PC-3 (cell line): ENCODE measurements at regions of chr3 and their contacts with region 1.

Region 1: DNA sequence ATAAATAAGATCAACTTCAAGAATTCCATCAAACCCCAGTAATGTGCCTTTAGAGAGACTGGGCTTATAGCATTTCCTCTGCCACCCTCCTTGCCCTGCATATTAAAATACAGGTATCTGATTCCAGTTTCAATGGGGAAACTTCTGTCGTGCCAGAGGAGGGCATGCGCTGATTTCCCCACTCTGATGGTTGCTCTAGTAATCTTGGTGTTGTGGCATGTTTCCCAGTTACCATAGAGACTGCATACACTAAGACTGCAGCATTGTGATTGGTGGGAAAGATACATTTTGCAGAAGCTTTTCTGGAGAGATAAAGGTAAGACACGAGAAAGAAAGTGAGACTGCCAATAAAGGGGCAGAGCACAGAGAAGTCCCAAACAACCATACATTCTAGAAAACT is 225.6 kb downstream of the TIGIT start:
- DNase-seq: no peak
- ATAC-seq: no peak
- H3K4me3 ChIP-seq: no peak overlapping the region
- H3K27ac ChIP-seq: no peak overlapping the region
- H3K4me1 ChIP-seq: no peaks in the 10 kb centered on the region
- H3K27me3 ChIP-seq: no peaks in the 10 kb centered on the region
- CTCF ChIP-seq: no peak

Region 2: DNA sequence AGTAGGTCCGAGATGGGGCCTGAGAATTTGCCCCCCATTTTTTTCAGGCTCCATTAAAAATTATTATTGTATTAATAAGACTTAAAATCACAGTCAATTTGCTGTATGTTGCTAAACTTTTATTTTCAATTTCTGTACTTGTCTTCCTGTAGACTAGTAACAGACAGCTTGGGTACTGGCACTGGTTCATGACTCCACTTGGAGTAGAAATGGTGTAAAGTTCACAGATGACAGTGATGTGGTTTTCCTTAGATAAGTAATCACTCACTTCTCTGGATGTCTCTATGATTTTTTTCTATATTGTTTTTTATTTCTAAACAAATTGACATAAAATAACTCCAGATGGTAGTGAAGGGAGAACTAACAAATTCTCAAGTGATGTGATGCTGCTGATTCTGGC is 266.5 kb before region 1 on chr3:
- CTCF ChIA-PET with region 1: no interaction called
- POLR2A ChIA-PET with region 1: no interaction called
- intact Hi-C with region 1: no loop called
- DNase-seq: no peak
- ATAC-seq: no peak
- H3K4me3 ChIP-seq: no peak overlapping the region
- H3K27ac ChIP-seq: no peak overlapping the region
- H3K4me1 ChIP-seq: no peaks in the 10 kb centered on the region
- H3K27me3 ChIP-seq: no peaks in the 10 kb centered on the region
- CTCF ChIP-seq: no peak

Region 3: DNA sequence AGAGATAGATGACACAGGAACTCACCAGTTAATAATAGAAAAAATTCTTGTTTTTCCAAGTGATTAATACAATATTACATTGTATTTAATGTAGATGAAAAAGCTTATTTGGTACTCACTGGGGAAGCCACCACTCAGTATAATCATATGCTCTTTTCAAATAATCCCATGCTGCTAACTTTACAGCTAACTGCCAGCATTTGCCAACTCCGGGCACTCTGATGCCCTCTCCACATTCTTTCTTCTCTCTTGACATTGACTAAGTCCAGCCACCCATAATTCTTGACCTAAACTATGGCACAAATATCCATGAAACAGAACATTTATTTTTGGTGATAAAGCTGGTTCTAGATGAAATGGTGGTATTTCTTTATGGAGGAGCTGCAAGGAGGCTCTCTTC is 242.7 kb after region 1 on chr3:
- CTCF ChIA-PET with region 1: no interaction called
- POLR2A ChIA-PET with region 1: interaction called, 14 read pairs
- intact Hi-C with region 1: no loop called
- DNase-seq: no peak
- ATAC-seq: no peak
- H3K4me3 ChIP-seq: no peak overlapping the region
- H3K27ac ChIP-seq: no peak overlapping the region
- H3K4me1 ChIP-seq: 0 out of 2 replicates have a peak, but pooled peaks cover 6% of the 10 kb centered on the region
- H3K27me3 ChIP-seq: no peaks in the 10 kb centered on the region
- CTCF ChIP-seq: no peak